ENCODE measurements at regions of chr3 and their contacts with region 1.

Region 1: GRCh38 chr3:193971261-193971751 is 164.6 kb upstream of the HES1 start:
- DNase-seq: no peak
- H3K4me3 ChIP-seq: no peak overlapping the region
- CTCF ChIP-seq: no peak

Region 2: GRCh38 chr3:193805509-193805908 is 165.8 kb before region 1 on chr3:
- in situ Hi-C with region 1: loop called (anchors 25 kb)
- DNase-seq: peak; percentile 98
- H3K4me3 ChIP-seq: no peak overlapping the region
- CTCF ChIP-seq: no peak

Region 3: DNA sequence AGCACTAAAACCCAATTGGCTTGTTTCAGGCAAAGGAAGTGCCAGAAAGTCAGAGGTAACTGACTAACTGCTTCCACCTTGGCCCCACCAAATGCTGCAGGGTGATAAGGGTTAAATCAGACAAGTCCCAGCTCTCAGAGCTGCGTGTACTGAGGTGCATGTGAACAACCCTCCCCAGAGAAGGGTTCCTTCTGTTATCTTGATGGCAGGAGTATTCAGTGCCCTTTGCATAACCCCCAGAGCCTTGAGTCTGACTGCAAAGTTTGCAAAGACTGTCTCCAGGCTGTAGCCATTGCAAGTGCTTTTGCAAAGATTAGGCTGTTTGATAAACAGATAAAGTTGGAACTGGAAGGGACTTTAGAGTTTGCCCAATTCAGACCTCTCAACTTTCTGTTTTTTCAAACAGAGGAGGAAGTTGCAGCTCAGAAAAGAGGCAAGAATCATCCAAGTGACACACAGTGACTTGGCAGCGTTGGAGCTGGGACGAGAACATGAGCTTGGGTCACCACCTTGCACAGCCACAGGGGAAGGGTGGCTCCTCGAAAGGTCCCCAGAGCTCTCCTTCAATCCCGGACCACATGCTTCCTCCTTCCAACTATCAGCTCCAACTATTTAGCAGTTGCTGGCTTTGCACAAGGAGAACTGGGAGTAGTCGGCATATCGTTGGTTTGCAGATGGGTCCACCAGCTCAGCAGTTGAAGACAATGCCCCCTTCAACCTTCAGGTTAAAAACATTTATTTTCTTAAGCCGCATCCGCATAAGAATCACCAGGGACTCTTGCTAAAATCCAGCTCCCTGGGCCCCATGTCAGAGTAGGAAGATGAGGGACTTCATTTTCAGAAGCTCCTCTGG is 60.2 kb before region 1 on chr3:
- in situ Hi-C with region 1: loop called (anchors 10 kb)
- DNase-seq: no peak
- H3K4me3 ChIP-seq: no peak overlapping the region
- CTCF ChIP-seq: no peak

Measured in astrocyte of the cerebellum (primary cell).